Pancreas (tissue), 10 donors: ENCODE measurements at regions of chr5 and their contacts with region 1.

Region 1: GRCh38 chr5:77015938-77016569 is 14.2 kb upstream of the AGGF1 start:
- DNase-seq: no peak
- ATAC-seq: peak in 3 of 4 donors; percentile 29 to 53 (median 29)
- H3K4me3 ChIP-seq: no peak overlapping the region
- H3K27ac ChIP-seq: no peak overlapping the region
- H3K4me1 ChIP-seq: no peaks in the 10 kb centered on the region
- H3K27me3 ChIP-seq: no peaks in the 10 kb centered on the region
- CTCF ChIP-seq: no peak

Region 2: GRCh38 chr5:76874088-76874581 is 141.9 kb before region 1 on chr5:
- intact Hi-C with region 1: loop called in 1 of 3 experiments (anchors 10 kb)
- DNase-seq: no peak
- ATAC-seq: peak in 3 of 4 donors; percentile 30 to 75 (median 69)
- H3K4me3 ChIP-seq: no peak overlapping the region
- H3K27ac ChIP-seq: no peak overlapping the region
- H3K4me1 ChIP-seq: no peaks in the 10 kb centered on the region
- H3K27me3 ChIP-seq: no peaks in the 10 kb centered on the region
- CTCF ChIP-seq: no peak

Region 3: GRCh38 chr5:77250021-77250420 is 234.0 kb after region 1 on chr5:
- intact Hi-C with region 1: no loop called
- DNase-seq: no peak
- ATAC-seq: no peak
- H3K4me3 ChIP-seq: no peak overlapping the region
- H3K27ac ChIP-seq: no peak overlapping the region
- H3K4me1 ChIP-seq: peaks cover 0 to 6% (median 0%) of the 10 kb centered on the region in 3 donors
- H3K27me3 ChIP-seq: no peaks in the 10 kb centered on the region
- CTCF ChIP-seq: no peak